Posterior vena cava (tissue), 2 donors: ENCODE measurements at regions of chr9 and their contacts with region 1.

Region 1: DNA sequence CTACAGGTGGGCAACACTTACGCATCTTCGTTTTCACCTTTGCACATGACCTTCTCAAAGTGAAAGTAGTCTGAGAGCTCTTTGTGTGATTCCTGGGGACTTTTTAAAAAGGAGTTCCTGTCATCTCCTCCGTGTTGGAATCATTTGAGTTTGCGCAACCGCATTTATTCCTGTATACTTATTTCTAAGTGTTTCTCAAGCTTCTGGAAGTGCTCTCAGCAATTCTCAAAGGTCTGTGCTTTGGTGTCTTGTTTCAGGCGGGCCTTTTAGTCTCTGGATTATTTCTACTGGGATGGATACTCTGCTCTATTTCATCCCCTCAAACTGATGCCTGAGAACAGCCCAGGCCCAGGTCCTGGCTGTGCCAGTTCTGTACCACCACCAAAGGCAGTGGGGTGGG is 226.5 kb upstream of the TUT7 start:
- DNase-seq: no peak

Region 2: DNA sequence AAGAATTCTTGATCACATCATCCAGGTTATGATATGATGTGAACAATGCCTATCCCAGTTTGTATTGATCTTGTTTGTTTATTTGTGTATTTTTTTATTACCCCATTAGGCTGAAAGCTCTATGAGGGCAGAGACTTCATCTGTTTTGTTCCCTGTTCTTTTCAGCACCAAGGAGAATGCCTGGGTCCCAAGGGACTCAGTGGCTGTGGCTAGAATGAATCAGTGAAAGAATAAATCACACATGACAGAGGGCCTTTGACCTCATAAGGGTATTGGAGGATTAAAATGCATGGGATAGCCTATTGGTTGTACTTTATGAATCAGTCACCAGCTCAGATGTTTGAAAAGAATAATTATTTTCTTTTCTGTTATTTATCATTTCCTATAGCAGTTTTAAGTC is 74.5 kb after region 1 on chr9:
- intact Hi-C with region 1: no loop called
- DNase-seq: no peak

Region 3: GRCh38 chr9:88534456-88535261 is 1954.0 kb after region 1 on chr9 and contains the start of gene NXNL2:
- intact Hi-C with region 1: loop called in 1 of 2 experiments (anchors 5 kb)
- DNase-seq: peak; percentile 94
- total RNA-seq, gene NXNL2: 1.00 TPM in 1 of 2 donors, not detected in the other